ENCODE measurements at regions of chr17 and their contacts with region 1.

Region 1: DNA sequence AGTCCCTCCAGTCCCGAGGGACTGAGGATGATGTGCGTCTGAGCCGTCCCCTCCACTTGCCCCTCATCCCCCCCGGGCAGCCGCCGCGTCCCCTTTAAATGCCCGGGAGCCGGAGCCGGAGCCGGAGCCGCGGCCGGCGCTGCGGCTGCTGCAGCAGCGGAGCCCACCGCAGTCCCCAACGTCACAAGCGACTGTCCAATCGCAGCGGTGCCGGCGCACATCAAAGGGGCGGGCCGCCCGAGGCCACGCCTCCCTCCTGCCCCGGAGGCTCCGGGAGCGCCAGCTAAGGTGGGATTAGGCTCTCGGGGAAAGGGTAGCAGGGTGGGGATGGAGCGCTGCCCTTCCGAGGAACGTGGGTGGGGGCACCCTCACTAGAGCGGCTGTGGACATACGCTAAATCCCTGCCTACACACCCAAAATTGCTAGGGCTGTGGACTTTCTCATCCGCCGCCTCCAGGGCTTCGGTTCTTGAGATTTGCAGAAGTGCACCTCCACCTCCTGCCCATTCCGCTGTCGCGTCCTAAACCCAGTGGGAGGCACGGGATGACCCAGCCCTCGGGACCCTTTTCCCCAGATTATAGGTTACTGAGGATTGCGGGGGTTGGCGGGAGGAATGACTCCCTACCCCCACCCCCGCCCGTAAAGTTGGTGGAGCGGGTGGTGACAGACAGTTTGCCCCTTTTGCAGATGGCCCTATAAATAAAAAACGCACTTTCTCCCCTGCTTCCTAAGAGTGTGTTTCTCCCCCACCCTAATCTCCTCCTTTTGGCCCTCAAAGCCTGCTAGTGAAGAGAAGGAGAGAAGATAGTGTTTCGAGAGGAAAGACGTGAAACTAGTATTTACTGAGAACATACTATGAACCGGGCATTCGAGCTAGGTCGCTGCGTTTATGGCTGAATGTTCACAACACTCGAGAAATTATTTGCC is at the start of gene PHOSPHO1:
- DNase-seq: peak; percentile 89
- ATAC-seq: peak; percentile 94
- H3K4me3 Mint-ChIP-seq: peak within 1 kb of the TSS; percentile 80
- H3K27ac Mint-ChIP-seq: no peak within 1 kb of the TSS
- H3K4me1 Mint-ChIP-seq: peaks cover 17% of the 10 kb centered on the region
- H3K27me3 Mint-ChIP-seq: peaks cover 7% of the 10 kb centered on the region
- CTCF ChIP-seq: no peak
- total RNA-seq, gene PHOSPHO1: 0.59 TPM in 1 of 2 replicates, not detected in the other

Region 2: GRCh38 chr17:48068491-48068961 is 1162.4 kb before region 1 on chr17:
- CTCF ChIA-PET with region 1: no interaction called
- POLR2A ChIA-PET with region 1: no interaction called
- intact Hi-C with region 1: no loop called
- DNase-seq: no peak
- ATAC-seq: peak; percentile 57
- H3K4me3 Mint-ChIP-seq: no peak overlapping the region
- H3K27ac Mint-ChIP-seq: peak overlapping the region; percentile 41
- H3K4me1 Mint-ChIP-seq: no peaks in the 10 kb centered on the region
- H3K27me3 Mint-ChIP-seq: no peaks in the 10 kb centered on the region
- CTCF ChIP-seq: no peak

Region 3: DNA sequence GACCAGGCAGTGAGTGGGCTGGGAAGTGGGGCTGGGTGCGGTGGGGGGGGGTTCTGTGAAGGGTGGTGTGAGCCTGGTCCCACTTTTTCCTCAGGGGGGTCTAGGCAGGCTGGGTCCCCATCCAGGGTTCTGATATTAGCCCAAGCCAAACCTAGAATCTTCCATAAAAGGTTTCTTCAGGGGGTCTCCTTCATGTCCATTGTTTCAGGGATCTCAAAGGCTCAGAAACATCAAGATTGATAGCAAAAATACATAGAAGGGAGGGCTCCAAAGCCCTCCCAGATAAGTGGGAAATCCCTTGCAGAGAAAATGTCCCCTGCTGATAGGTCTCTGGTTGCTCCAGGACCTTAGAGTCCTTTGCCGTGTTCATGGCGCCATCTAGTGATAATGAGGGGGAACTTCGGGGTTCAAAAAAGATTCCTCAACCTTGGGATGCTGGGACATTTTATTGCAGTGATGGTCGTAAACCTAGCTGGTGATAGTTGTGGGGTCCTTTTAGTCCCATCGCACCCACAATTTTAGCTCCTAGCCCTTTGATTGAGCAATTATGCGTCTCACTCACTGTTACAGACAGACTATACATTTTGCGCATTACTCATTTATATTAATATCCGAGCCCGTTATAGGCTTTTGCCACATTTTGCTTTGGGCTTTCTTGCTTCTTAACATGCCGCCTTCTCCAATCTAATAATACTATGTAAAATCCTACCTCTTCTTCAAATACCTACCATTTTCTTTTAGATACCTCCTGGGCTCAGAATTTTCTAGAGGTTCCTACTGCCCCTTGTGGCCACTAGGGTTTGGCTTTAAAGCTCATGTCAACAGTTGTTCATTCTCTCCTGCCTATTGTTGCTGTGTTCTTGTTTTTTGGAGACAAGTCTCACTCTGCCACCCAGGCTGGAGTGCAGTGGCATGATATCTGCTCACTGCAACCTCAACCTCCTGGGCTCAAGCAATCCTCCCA is 198.7 kb before region 1 on chr17:
- CTCF ChIA-PET with region 1: no interaction called
- POLR2A ChIA-PET with region 1: no interaction called
- intact Hi-C with region 1: loop called (anchors 1 kb)
- DNase-seq: no peak
- ATAC-seq: peak; percentile 80
- H3K4me3 Mint-ChIP-seq: no peak overlapping the region
- H3K27ac Mint-ChIP-seq: no peak overlapping the region
- H3K4me1 Mint-ChIP-seq: peaks cover 6% of the 10 kb centered on the region
- H3K27me3 Mint-ChIP-seq: peaks cover 6% of the 10 kb centered on the region
- CTCF ChIP-seq: no peak

Region 4: GRCh38 chr17:49180303-49180702 is 50.6 kb before region 1 on chr17:
- CTCF ChIA-PET with region 1: interaction called, 197 read pairs
- POLR2A ChIA-PET with region 1: interaction called, 6 read pairs
- intact Hi-C with region 1: loop called (anchors 1 kb)
- DNase-seq: peak; percentile 58
- ATAC-seq: peak; percentile 52
- H3K4me3 Mint-ChIP-seq: no peak overlapping the region
- H3K27ac Mint-ChIP-seq: no peak overlapping the region
- H3K4me1 Mint-ChIP-seq: peaks cover 4% of the 10 kb centered on the region
- H3K27me3 Mint-ChIP-seq: peaks cover 1% of the 10 kb centered on the region
- CTCF ChIP-seq: peak; percentile 54

Region 5: GRCh38 chr17:49217651-49218413 is 13.1 kb before region 1 on chr17:
- CTCF ChIA-PET with region 1: interaction called, 6 read pairs
- POLR2A ChIA-PET with region 1: interaction called, 9 read pairs
- intact Hi-C with region 1: loop called (anchors 1 kb)
- DNase-seq: no peak
- ATAC-seq: peak; percentile 37
- H3K4me3 Mint-ChIP-seq: peak overlapping the region; percentile 67
- H3K27ac Mint-ChIP-seq: peak overlapping the region; percentile 94
- H3K4me1 Mint-ChIP-seq: peaks cover 70% of the 10 kb centered on the region
- H3K27me3 Mint-ChIP-seq: no peaks in the 10 kb centered on the region
- CTCF ChIP-seq: no peak

Region 6: DNA sequence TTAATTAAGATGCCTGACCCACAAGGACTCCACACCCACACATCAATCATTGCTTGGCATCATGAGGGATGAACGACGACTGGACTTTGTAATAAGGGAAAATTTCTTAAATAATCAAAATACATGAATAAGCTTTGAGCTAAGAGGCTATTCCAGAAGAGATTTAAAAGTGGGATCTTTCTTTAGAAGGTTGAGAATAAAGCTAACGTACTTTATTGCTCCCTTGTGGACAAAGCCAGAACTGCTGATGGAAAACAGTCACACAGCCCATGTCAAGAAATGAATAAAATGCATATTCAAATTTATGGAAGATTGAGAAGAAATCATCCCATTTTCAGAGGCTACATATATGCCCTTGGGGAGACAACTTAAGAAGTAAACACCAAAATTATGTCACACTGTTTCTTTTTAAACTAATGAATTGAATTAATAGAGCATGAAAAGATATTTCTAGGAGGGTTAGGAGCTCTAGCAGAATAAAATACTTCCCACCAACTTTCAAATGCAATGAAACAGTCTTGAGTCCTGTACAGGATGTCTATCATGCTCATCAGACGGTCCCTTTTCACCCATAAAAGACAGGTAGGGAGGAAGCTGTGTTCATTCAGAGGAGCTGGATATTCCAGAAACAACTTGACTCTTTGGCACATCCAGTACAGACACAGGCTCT is 59.9 kb after region 1 on chr17:
- CTCF ChIA-PET with region 1: interaction called, 5 read pairs
- POLR2A ChIA-PET with region 1: no interaction called
- intact Hi-C with region 1: loop called (anchors 2 kb)
- DNase-seq: no peak
- ATAC-seq: no peak
- H3K4me3 Mint-ChIP-seq: no peak overlapping the region
- H3K27ac Mint-ChIP-seq: no peak overlapping the region
- H3K4me1 Mint-ChIP-seq: no peaks in the 10 kb centered on the region
- H3K27me3 Mint-ChIP-seq: no peaks in the 10 kb centered on the region
- CTCF ChIP-seq: peak; percentile 26